Right cardiac atrium (tissue), 5 donors: ENCODE measurements at regions of chr2 and their contacts with region 1.

Region 1: GRCh38 chr2:188524519-188525113 is 232.9 kb downstream of the GULP1 start:
- DNase-seq: peak in 1 of 3 donors; percentile 24
- ATAC-seq: no peak
- H3K4me3 ChIP-seq: no peak overlapping the region
- H3K27ac ChIP-seq: no peak overlapping the region
- H3K4me1 ChIP-seq: no peaks in the 10 kb centered on the region
- H3K27me3 ChIP-seq: no peaks in the 10 kb centered on the region

Region 2: DNA sequence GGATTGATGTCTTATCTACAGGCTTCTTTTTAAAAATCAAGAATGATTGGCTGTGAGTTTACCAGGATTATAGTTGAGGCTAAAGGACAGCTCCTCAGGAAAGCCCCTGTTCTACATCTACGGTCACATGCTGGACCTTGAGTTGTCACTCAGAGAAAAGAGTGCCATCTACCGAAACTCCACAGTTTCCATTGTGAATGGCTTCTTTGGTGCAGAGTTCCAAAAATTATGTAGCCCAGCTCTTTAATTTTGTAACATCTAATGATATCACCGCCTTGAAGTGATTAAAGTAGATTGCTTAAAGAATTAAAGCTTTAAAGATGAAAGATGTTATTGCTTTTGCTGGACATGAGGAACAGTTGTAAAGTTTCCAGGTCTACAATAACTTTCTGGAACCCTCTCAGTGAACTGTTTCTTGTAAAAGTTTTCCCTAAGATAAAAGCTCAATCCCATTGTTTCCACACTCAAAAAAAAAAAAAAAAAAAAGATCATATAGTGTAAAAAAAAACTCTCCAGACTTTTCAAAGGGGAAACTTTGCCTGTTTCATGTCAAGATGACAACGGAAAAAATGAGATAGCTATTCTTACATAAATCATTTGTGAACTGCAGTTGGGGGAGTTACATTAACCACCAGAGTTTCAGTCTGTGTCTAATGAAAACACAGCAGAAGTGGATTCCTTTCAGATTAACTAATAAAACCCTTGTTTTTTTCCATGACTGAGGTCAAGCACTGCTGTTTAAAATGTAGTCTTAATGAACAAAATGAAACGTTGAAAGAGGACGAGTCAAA is 453.9 kb after region 1 on chr2:
- intact Hi-C with region 1: loop called in 3 of 4 experiments (anchors 10 kb)
- DNase-seq: no peak
- ATAC-seq: peak; percentile 57 to 61
- H3K4me3 ChIP-seq: peak overlapping the region; percentile 45
- H3K27ac ChIP-seq: no peak overlapping the region
- H3K4me1 ChIP-seq: no peaks in the 10 kb centered on the region
- H3K27me3 ChIP-seq: no peaks in the 10 kb centered on the region

Region 3: DNA sequence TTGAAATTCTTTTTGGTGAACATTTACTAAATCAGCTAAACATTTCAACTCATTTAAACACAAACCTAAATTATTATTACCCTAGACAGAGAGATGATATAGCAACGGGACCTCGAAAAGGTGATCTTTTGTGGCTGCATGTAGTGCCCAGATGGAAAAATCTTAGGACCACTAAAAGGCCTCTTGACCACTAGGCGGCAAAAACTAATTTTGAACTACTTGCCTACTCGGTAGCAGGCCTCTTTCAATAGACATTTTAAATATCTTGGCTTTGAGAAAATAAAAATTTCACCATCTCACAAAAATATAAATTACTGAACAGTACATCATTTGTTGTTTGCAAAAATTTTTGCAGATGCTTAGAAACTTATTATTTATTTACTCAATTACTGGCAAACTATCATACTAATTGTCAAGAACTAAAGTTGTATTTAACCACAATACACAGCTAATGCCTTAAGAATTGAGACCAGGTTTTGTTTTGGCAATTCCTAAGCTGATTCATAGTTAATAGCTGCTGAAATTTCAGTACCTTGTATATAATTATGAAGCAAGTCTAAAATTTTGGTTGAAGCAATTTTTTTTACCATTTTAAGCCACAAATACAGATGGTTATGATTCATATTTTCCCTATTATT is 458.9 kb after region 1 on chr2:
- intact Hi-C with region 1: loop called in 3 of 4 experiments (anchors 10 kb)
- DNase-seq: no peak
- ATAC-seq: no peak
- H3K4me3 ChIP-seq: no peak overlapping the region
- H3K27ac ChIP-seq: no peak overlapping the region
- H3K4me1 ChIP-seq: no peaks in the 10 kb centered on the region
- H3K27me3 ChIP-seq: no peaks in the 10 kb centered on the region

Region 4: GRCh38 chr2:189287982-189288521 is 763.4 kb after region 1 on chr2:
- intact Hi-C with region 1: loop called in 1 of 4 experiments (anchors 10 kb)
- DNase-seq: no peak
- ATAC-seq: peak; percentile 59 to 70
- H3K4me3 ChIP-seq: no peak overlapping the region
- H3K27ac ChIP-seq: no peak overlapping the region
- H3K4me1 ChIP-seq: no peaks in the 10 kb centered on the region
- H3K27me3 ChIP-seq: no peaks in the 10 kb centered on the region

Region 5: GRCh38 chr2:189412330-189412953 is 887.8 kb after region 1 on chr2:
- intact Hi-C with region 1: loop called in 3 of 4 experiments (anchors 5 kb)
- DNase-seq: no peak
- ATAC-seq: peak; percentile 59 to 67
- H3K4me3 ChIP-seq: no peak overlapping the region
- H3K27ac ChIP-seq: no peak overlapping the region
- H3K4me1 ChIP-seq: no peaks in the 10 kb centered on the region
- H3K27me3 ChIP-seq: no peaks in the 10 kb centered on the region